CD14-positive monocyte (primary cell): ENCODE measurements at regions of chr1 and their contacts with region 1.

Region 1: DNA sequence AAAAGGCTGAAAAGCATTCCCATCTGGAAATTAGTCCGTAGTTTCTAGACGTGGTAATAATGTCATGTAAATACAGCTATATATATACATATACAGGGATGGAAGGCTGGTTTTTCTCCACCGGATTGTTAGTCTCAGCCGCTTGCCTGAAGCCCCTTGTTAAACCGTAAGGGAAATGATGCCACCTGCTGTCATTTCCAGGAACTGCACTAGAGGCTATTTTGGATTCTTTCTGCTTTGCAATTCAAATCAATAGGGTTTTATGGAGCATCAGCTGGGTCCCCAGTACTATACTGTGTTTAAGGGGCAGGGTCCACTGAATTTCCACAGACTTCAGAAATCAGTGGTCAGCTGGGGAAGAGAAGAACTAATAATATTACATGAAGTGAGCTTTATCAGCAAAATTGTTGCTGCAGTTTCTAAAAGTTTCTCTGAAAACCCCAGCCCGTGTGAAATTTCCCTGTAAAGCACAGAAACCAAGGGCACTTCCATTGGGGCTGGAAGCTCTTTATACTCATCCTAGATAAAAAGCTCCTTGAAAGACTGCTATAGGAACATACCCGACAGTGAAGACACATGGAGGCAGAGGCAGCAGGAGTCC is 33.8 kb upstream of the MPZL1 start:
- DNase-seq: peak; percentile 49 to 75 (median 63)
- H3K4me3 ChIP-seq: no peak overlapping the region
- H3K4me3 Mint-ChIP-seq: no peak overlapping the region
- H3K27ac ChIP-seq: peak overlapping the region; percentile 45 to 73
- H3K27ac Mint-ChIP-seq: peak overlapping the region in 6 of 7 donors; percentile 7 to 84 (median 56)
- H3K4me1 ChIP-seq: peaks cover 14 to 22% of the 10 kb centered on the region in 2 donors
- H3K4me1 Mint-ChIP-seq: peaks cover 29% of the 10 kb centered on the region
- H3K27me3 ChIP-seq: no peaks in the 10 kb centered on the region
- H3K27me3 Mint-ChIP-seq: no peaks in the 10 kb centered on the region
- CTCF ChIP-seq: peak; percentile 87

Region 2: GRCh38 chr1:167401260-167401873 is 286.7 kb before region 1 on chr1:
- intact Hi-C with region 1: loop called (anchors 10 kb)
- DNase-seq: peak; percentile 23 to 47 (median 26)
- H3K4me3 ChIP-seq: no peak overlapping the region
- H3K4me3 Mint-ChIP-seq: no peak overlapping the region
- H3K27ac ChIP-seq: no peak overlapping the region
- H3K27ac Mint-ChIP-seq: no peak overlapping the region
- H3K4me1 ChIP-seq: no peaks in the 10 kb centered on the region
- H3K4me1 Mint-ChIP-seq: no peaks in the 10 kb centered on the region
- H3K27me3 ChIP-seq: no peaks in the 10 kb centered on the region
- H3K27me3 Mint-ChIP-seq: no peaks in the 10 kb centered on the region
- CTCF ChIP-seq: peak; percentile 74

Region 3: GRCh38 chr1:167553136-167554027 is 134.6 kb before region 1 on chr1 and contains the start of gene CREG1:
- intact Hi-C with region 1: loop called (anchors 5 to 10 kb)
- DNase-seq: peak; percentile 88 to 90 (median 89)
- H3K4me3 ChIP-seq: peak within 1 kb of the TSS; percentile 87 to 95 (median 88)
- H3K4me3 Mint-ChIP-seq: peak within 1 kb of the TSS; percentile 86 to 90
- H3K27ac ChIP-seq: peak within 1 kb of the TSS; percentile 58 to 91
- H3K27ac Mint-ChIP-seq: peak within 1 kb of the TSS; percentile 93 to 100 (median 94)
- H3K4me1 ChIP-seq: peaks cover 62 to 65% of the 10 kb centered on the region in 2 donors
- H3K4me1 Mint-ChIP-seq: peaks cover 64% of the 10 kb centered on the region
- H3K27me3 ChIP-seq: no peaks in the 10 kb centered on the region
- H3K27me3 Mint-ChIP-seq: peaks cover 0 to 1% (median 0%) of the 10 kb centered on the region in 3 donors
- CTCF ChIP-seq: no peak
- polyA plus RNA-seq, gene CREG1: 150 to 309 (median 248) TPM